Activated CD4-positive, alpha-beta memory T cell treated with anti-CD3 and anti-CD28 coated beads for 36 hours (primary cell): ENCODE measurements at regions of chr6 and their contacts with region 1.

Region 1: GRCh38 chr6:31580807-31581433 is 1.3 kb downstream of the LTB start:
- DNase-seq: peak; percentile 92
- H3K4me3 Mint-ChIP-seq: peak overlapping the region; percentile 97
- H3K27ac Mint-ChIP-seq: peak overlapping the region; percentile 92
- H3K4me1 Mint-ChIP-seq: peaks cover 44% of the 10 kb centered on the region
- H3K27me3 Mint-ChIP-seq: no peaks in the 10 kb centered on the region

Region 2: DNA sequence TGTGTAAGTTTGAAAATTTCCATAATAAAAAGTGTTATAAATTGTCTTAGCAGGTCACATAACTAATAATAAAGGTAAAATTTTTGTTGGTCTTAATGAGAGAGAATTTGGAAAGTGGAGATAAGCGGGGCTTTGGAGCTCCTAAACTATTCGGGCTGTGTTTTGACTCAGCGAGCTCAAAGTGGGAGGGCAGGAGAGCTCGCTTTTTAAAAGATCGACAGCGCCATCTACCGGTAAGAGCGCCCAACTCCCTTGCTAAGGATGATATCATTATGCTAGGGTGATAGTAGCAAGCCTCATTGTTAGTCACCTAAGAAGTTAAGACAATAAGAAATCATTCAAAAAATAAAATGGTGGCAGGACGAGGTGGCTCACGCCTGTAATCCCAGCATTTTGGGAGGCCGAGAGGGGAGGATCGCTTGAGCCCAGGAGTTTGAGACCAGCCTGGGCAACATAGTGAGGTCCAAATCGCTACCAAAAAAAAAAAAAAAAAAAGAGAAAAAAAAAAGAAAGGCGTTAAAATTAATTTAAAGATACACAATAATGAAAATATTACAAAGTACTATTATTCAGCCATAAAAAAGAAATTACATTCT is 493.3 kb before region 1 on chr6:
- CTCF ChIA-PET with region 1: no interaction called
- POLR2A ChIA-PET with region 1: no interaction called
- intact Hi-C with region 1: no loop called
- DNase-seq: peak; percentile 92
- H3K4me3 Mint-ChIP-seq: peak overlapping the region; percentile 12
- H3K27ac Mint-ChIP-seq: peak overlapping the region; percentile 45
- H3K4me1 Mint-ChIP-seq: peaks cover 11% of the 10 kb centered on the region
- H3K27me3 Mint-ChIP-seq: no peaks in the 10 kb centered on the region

Region 3: GRCh38 chr6:31525932-31526591 is 54.9 kb before region 1 on chr6:
- CTCF ChIA-PET with region 1: no interaction called
- POLR2A ChIA-PET with region 1: no interaction called
- intact Hi-C with region 1: no loop called
- DNase-seq: no peak
- H3K4me3 Mint-ChIP-seq: no peak overlapping the region
- H3K27ac Mint-ChIP-seq: no peak overlapping the region
- H3K4me1 Mint-ChIP-seq: peaks cover 3% of the 10 kb centered on the region
- H3K27me3 Mint-ChIP-seq: no peaks in the 10 kb centered on the region

Region 4: DNA sequence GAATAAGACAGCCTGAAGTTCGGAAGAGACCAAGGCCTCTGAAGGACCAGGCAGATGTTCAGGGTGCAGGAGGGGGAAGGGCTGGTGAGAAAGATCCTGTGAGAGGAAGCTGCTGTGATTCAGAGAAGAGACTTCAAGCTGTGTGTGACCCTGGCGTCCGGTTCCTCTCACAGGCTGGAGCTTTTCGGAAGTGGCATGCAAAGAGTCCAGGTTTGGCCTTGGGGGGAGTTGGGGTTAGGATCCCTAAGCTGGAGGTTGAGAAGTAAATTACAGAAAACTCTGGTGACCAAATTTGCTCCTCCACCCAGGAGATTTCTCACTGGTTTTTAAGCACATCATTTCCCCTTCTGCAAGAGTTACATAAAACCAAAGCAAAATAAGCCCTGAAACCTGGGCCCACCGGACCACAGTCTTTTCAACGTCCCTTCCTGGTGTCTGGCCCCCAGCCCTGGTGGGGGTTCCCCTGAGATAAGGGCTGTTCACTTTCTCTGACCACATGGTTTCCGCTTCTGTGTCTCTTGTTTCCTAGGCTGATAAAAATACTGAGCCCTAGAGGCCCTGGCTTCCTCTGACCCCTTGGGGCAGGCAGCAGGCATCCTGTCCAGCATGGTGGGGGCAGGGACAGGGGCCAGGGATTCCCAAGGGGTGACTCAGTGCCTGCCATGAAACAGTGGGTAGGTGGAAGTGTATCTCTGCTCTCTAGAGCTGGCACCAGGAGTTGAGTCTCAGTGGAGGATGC is 20.8 kb before region 1 on chr6:
- CTCF ChIA-PET with region 1: interaction called, 1,658 read pairs
- POLR2A ChIA-PET with region 1: interaction called, 259 read pairs
- intact Hi-C with region 1: loop called (anchors 1 kb)
- DNase-seq: peak; percentile 81
- H3K4me3 Mint-ChIP-seq: peak overlapping the region; percentile 59
- H3K27ac Mint-ChIP-seq: peak overlapping the region; percentile 86
- H3K4me1 Mint-ChIP-seq: peaks cover 80% of the 10 kb centered on the region
- H3K27me3 Mint-ChIP-seq: no peaks in the 10 kb centered on the region

Region 5: GRCh38 chr6:31568537-31568961 is 12.4 kb before region 1 on chr6:
- CTCF ChIA-PET with region 1: interaction called, 1,658 read pairs
- POLR2A ChIA-PET with region 1: interaction called, 259 read pairs
- intact Hi-C with region 1: loop called (anchors 1 kb)
- DNase-seq: peak; percentile 86
- H3K4me3 Mint-ChIP-seq: peak overlapping the region; percentile 35
- H3K27ac Mint-ChIP-seq: peak overlapping the region; percentile 72
- H3K4me1 Mint-ChIP-seq: peaks cover 72% of the 10 kb centered on the region
- H3K27me3 Mint-ChIP-seq: no peaks in the 10 kb centered on the region